Heart left ventricle (tissue), 16 donors: ENCODE measurements at regions of chr14 and their contacts with region 1.

Region 1: DNA sequence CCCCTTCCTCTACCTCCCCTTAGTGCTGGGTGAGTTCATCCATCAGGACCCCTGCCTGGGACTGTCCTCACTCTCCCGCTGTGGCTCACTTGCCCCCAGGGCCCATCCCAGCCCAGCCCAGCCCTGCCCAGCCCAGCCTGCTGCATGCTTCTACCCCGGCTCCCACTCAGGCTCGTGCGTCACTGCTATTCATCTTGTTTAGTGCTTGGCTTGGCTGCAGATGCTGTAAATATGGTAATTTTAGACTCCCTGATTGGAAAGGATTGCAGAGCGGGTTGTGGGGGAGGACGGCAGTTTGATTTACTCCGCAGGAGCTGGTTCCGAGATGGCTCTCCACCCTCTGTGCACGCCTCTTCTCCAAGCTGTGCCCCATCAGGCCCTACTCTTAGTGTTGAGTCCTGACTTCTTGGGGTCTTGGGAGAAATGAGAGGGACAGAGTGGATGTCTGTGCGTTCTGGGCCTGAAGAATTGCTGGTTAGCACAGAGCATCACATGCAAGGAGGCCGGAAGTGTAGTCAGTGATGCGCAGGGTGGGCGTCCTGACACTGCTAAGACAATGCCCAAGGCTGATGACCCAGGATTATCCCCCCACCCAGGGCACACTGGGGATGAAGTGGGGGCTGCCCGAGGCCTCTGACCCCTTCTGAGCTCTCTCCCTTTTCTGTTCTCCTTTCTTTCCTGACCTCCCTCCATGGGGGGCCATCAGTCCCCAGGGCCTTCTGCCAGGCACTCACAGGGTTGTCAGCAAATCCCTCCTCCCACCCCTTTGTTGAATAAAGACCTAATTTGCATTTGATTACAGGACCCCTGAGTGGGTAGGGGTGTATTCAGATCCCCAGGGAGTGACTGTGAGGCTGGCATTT is 244.4 kb downstream of the ZFP36L1 start:
- DNase-seq: peak; percentile 88 to 96 (median 92)
- ATAC-seq: peak; percentile 89 to 94 (median 92)
- H3K4me3 ChIP-seq: no peak overlapping the region
- H3K27ac ChIP-seq: peak overlapping the region; percentile 87 to 99 (median 96)
- H3K4me1 ChIP-seq: peaks cover 11 to 89% (median 63%) of the 10 kb centered on the region in 12 donors
- H3K27me3 ChIP-seq: no peaks in the 10 kb centered on the region
- CTCF ChIP-seq: no peak
- POLR2A ChIP-seq: peak in 1 of 2 donors; percentile 47

Region 2: DNA sequence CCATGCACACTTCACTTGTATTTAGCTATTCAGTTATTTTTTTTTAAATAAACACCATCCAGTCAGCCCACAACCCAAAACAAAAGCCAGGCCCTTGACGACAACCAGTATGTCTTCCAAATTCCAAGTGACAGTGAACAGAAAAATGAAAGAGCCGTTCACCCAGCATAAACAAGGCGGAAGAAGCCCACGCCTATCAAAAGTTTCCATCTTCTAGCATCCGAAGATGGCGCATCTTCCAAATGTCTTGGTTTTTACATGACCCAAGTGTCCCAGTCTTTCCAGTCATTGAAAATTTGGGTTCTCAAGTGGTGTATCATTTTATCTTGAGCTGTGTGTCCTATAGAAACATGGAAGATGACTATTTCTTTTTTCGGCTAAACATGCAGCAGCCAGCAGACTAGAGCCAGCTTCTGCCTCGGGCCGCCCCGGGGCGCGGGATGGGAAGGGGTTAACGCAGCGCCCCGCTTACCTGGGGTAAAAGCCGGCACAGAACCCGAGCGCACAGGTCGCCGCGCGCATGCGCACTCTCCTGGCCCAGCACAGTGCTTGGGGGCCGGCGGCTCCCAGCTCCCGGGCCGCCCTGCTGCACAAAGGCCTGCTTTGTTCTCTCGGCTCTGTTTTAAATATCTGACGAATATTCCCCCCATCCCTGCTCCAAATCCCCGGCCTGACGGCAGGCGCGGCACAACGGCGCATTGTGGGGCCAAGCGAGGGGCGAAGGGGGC is 79.6 kb after region 1 on chr14:
- intact Hi-C with region 1: loop called in 4 of 10 experiments (anchors 5 to 10 kb)
- DNase-seq: peak in 4 of 5 donors; percentile 54 to 80 (median 63)
- ATAC-seq: peak in 3 of 4 donors; percentile 16 to 21 (median 21)
- H3K4me3 ChIP-seq: peak overlapping the region in 9 of 12 donors; percentile 11 to 47 (median 32)
- H3K27ac ChIP-seq: peak overlapping the region in 10 of 12 donors; percentile 19 to 78 (median 46)
- H3K4me1 ChIP-seq: peaks cover 0 to 57% (median 37%) of the 10 kb centered on the region in 12 donors
- H3K27me3 ChIP-seq: no peaks in the 10 kb centered on the region
- CTCF ChIP-seq: no peak
- POLR2A ChIP-seq: no peak

Region 3: DNA sequence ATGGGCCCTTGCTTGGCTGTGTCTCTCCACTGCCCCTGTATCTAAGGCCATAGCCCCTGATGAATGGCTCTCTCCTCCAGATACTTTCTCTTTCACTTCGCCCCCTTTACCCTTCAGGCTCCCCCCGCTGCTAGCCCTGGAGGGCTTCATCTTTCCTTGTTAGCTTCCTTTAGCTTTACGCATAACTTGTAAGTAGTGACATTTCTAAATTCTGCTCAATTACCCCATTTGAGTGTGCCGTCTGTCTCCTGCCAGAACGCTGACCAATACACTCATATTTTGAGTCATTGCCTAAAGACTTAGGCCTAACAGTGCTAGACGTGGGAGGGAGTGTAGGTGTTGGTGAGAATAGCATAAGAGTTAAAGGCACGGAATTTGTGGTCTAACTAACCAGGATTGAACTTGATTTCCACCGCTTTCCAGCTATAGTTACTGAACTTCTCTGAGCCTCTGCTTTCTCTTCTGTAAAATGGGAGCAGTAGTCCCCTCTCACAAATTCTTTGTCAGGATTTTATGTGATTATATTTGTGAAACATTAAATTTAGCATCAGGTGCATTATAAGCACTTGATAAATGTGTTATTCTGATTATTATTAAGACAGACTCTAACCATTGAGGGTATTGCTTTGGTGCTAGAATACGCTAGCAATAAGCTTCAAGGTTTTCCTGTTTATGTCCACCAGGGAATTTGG is 115.1 kb after region 1 on chr14:
- intact Hi-C with region 1: loop called in 2 of 10 experiments (anchors 10 kb)
- DNase-seq: no peak
- ATAC-seq: peak in 1 of 4 donors; percentile 48
- H3K4me3 ChIP-seq: peak overlapping the region in 1 of 12 donors; percentile 16
- H3K27ac ChIP-seq: peak overlapping the region in 2 of 12 donors; percentile 19 to 75
- H3K4me1 ChIP-seq: peaks cover 0 to 59% (median 35%) of the 10 kb centered on the region in 12 donors
- H3K27me3 ChIP-seq: no peaks in the 10 kb centered on the region
- CTCF ChIP-seq: no peak
- POLR2A ChIP-seq: no peak